Right cardiac atrium (tissue), 5 donors: ENCODE measurements at regions of chr9 and their contacts with region 1.

Region 1: GRCh38 chr9:37913480-37914153 is 9.7 kb upstream of the SLC25A51 start:
- DNase-seq: peak; percentile 66 to 88 (median 87)
- ATAC-seq: peak; percentile 66 to 80
- H3K4me3 ChIP-seq: no peak overlapping the region
- H3K27ac ChIP-seq: no peak overlapping the region
- H3K4me1 ChIP-seq: no peaks in the 10 kb centered on the region
- H3K27me3 ChIP-seq: no peaks in the 10 kb centered on the region

Region 2: DNA sequence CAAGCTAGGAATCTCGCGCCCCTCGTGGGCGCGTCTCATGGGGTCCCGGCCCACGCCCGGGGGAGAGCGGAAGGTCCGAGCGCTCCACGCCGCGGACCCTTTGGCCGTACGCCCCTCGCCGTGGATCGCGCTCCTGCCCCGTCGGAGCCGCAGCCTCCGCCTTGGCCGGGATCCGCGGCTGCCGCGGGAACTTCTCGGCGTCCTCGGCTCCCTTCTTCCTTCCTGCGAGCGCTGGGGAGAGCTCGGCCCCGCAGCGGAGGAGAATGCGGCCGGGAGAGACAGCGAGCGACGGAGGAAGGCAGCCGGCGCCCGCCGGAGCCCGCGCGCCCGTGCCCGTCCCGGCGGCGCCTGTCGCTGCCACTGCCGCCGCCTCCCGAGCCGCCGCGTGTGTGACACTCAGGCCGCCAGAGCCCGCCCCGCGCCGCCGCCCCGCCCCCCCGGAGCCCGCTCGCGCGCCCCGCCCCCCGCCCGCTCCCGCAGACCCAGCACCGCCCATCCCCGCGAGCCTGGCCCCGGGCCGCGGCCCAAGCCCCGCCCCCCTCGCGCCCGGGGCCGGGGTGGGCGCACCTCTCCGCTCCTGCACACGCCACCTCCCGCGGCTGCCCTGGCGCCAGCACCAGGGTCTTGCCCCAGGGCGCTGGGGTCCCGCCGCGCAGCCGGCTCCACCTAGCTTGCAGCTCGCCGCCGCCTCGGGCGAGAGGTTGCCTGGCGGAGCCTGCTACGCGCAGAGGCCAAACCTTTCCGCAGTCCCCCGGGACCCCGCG is 155.4 kb after region 1 on chr9 and contains the start of gene SHB:
- intact Hi-C with region 1: loop called in 3 of 4 experiments (anchors 5 kb)
- DNase-seq: peak; percentile 84 to 94 (median 94)
- ATAC-seq: peak; percentile 80 to 85
- H3K4me3 ChIP-seq: peak within 1 kb of the TSS; percentile 69
- H3K27ac ChIP-seq: peak within 1 kb of the TSS; percentile 87
- H3K4me1 ChIP-seq: peaks cover 4% of the 10 kb centered on the region
- H3K27me3 ChIP-seq: no peaks in the 10 kb centered on the region
- total RNA-seq, gene SHB: 25.7 to 38.9 (median 31.0) TPM

Region 3: GRCh38 chr9:38088006-38088925 is 174.6 kb after region 1 on chr9:
- intact Hi-C with region 1: loop called in 2 of 4 experiments (anchors 5 to 10 kb)
- DNase-seq: peak; percentile 74 to 92 (median 89)
- ATAC-seq: peak; percentile 75 to 86
- H3K4me3 ChIP-seq: no peak overlapping the region
- H3K27ac ChIP-seq: no peak overlapping the region
- H3K4me1 ChIP-seq: peaks cover 6% of the 10 kb centered on the region
- H3K27me3 ChIP-seq: no peaks in the 10 kb centered on the region

Region 4: GRCh38 chr9:38154501-38155421 is 241.1 kb after region 1 on chr9:
- intact Hi-C with region 1: loop called in 1 of 4 experiments (anchors 5 kb)
- DNase-seq: no peak
- ATAC-seq: no peak
- H3K4me3 ChIP-seq: no peak overlapping the region
- H3K27ac ChIP-seq: no peak overlapping the region
- H3K4me1 ChIP-seq: no peaks in the 10 kb centered on the region
- H3K27me3 ChIP-seq: no peaks in the 10 kb centered on the region

Region 5: GRCh38 chr9:38160613-38161215 is 247.1 kb after region 1 on chr9:
- intact Hi-C with region 1: loop called in 3 of 4 experiments (anchors 2 to 5 kb)
- DNase-seq: peak; percentile 57 to 82 (median 76)
- ATAC-seq: peak; percentile 40 to 67
- H3K4me3 ChIP-seq: no peak overlapping the region
- H3K27ac ChIP-seq: no peak overlapping the region
- H3K4me1 ChIP-seq: no peaks in the 10 kb centered on the region
- H3K27me3 ChIP-seq: no peaks in the 10 kb centered on the region

Region 6: DNA sequence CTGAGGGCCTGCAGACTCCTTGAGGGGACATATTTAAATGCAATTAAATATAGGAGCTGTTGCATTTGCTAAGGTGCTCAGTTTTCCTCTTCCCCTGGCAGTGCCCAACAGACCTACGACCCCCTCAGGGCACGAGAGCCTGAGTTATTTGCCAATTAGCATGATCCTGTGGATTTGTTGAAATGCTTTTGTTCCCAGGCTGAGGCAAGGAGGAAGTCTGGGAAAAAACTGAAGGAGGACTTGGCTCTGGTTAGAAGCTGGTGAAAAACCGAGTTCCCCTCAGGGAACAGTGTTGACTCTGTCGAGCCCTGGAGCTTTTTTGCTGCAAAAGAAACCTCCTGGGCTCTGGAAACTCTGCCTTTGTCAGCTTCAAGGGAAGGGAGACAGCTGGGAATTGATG is 259.0 kb after region 1 on chr9:
- intact Hi-C with region 1: loop called in 1 of 4 experiments (anchors 5 kb)
- DNase-seq: no peak
- ATAC-seq: no peak
- H3K4me3 ChIP-seq: no peak overlapping the region
- H3K27ac ChIP-seq: no peak overlapping the region
- H3K4me1 ChIP-seq: no peaks in the 10 kb centered on the region
- H3K27me3 ChIP-seq: no peaks in the 10 kb centered on the region

Region 7: GRCh38 chr9:38362852-38363593 is 449.4 kb after region 1 on chr9:
- intact Hi-C with region 1: loop called in 3 of 4 experiments (anchors 5 to 10 kb)
- DNase-seq: peak in 2 of 3 donors; percentile 31 to 69
- ATAC-seq: peak; percentile 82 to 86
- H3K4me3 ChIP-seq: no peak overlapping the region
- H3K27ac ChIP-seq: no peak overlapping the region
- H3K4me1 ChIP-seq: peaks cover 2% of the 10 kb centered on the region
- H3K27me3 ChIP-seq: no peaks in the 10 kb centered on the region